ENCODE measurements at regions of chr17 and their contacts with region 1.

Region 1: GRCh38 chr17:76384222-76384986 is at the start of gene SPHK1:
- DNase-seq: peak in 4 of 5 donors; percentile 38 to 60 (median 50)
- H3K4me3 ChIP-seq: peak within 1 kb of the TSS; percentile 42 to 64
- H3K4me3 Mint-ChIP-seq: peak within 1 kb of the TSS; percentile 86 to 95 (median 90)
- H3K27ac ChIP-seq: no peak within 1 kb of the TSS
- H3K27ac Mint-ChIP-seq: peak within 1 kb of the TSS; percentile 39 to 92 (median 72)
- H3K4me1 ChIP-seq: peaks cover 20% of the 10 kb centered on the region
- H3K4me1 Mint-ChIP-seq: peaks cover 0 to 6% (median 4%) of the 10 kb centered on the region in 4 donors
- H3K27me3 ChIP-seq: no peaks in the 10 kb centered on the region
- H3K27me3 Mint-ChIP-seq: no peaks in the 10 kb centered on the region
- total RNA-seq, gene SPHK1: 0.67 to 0.70 TPM

Region 2: GRCh38 chr17:76053246-76054116 is 330.9 kb before region 1 on chr17:
- CTCF ChIA-PET with region 1: no interaction called
- POLR2A ChIA-PET with region 1: no interaction called
- intact Hi-C with region 1: no loop called
- DNase-seq: no peak
- H3K4me3 ChIP-seq: no peak overlapping the region
- H3K4me3 Mint-ChIP-seq: no peak overlapping the region
- H3K27ac ChIP-seq: no peak overlapping the region
- H3K27ac Mint-ChIP-seq: peak overlapping the region in 4 of 7 donors; percentile 31 to 52 (median 42)
- H3K4me1 ChIP-seq: peaks cover 6% of the 10 kb centered on the region
- H3K4me1 Mint-ChIP-seq: peaks cover 14 to 23% (median 20%) of the 10 kb centered on the region in 4 donors
- H3K27me3 ChIP-seq: no peaks in the 10 kb centered on the region
- H3K27me3 Mint-ChIP-seq: no peaks in the 10 kb centered on the region

Region 3: GRCh38 chr17:76304226-76305134 is 79.9 kb before region 1 on chr17:
- CTCF ChIA-PET with region 1: interaction called, 27 read pairs
- POLR2A ChIA-PET with region 1: interaction called, 4 read pairs
- intact Hi-C with region 1: no loop called
- DNase-seq: no peak
- H3K4me3 ChIP-seq: no peak overlapping the region
- H3K4me3 Mint-ChIP-seq: no peak overlapping the region
- H3K27ac ChIP-seq: no peak overlapping the region
- H3K27ac Mint-ChIP-seq: peak overlapping the region in 1 of 7 donors; percentile 71
- H3K4me1 ChIP-seq: no peaks in the 10 kb centered on the region
- H3K4me1 Mint-ChIP-seq: peaks cover 0 to 1% (median 0%) of the 10 kb centered on the region in 4 donors
- H3K27me3 ChIP-seq: no peaks in the 10 kb centered on the region
- H3K27me3 Mint-ChIP-seq: no peaks in the 10 kb centered on the region

Region 4: GRCh38 chr17:76353599-76354316 is 30.6 kb before region 1 on chr17 and contains the start of gene PRPSAP1:
- CTCF ChIA-PET with region 1: interaction called, 21 read pairs
- POLR2A ChIA-PET with region 1: interaction called, 61 read pairs
- intact Hi-C with region 1: loop called (anchors 1 kb)
- DNase-seq: peak; percentile 82 to 90 (median 85)
- H3K4me3 ChIP-seq: peak within 1 kb of the TSS; percentile 52 to 88
- H3K4me3 Mint-ChIP-seq: peak within 1 kb of the TSS; percentile 92 to 99 (median 96)
- H3K27ac ChIP-seq: peak within 1 kb of the TSS; percentile 77
- H3K27ac Mint-ChIP-seq: peak within 1 kb of the TSS; percentile 82 to 99 (median 98)
- H3K4me1 ChIP-seq: peaks cover 16% of the 10 kb centered on the region
- H3K4me1 Mint-ChIP-seq: peaks cover 12 to 29% (median 20%) of the 10 kb centered on the region in 4 donors
- H3K27me3 ChIP-seq: no peaks in the 10 kb centered on the region
- H3K27me3 Mint-ChIP-seq: no peaks in the 10 kb centered on the region
- total RNA-seq, gene PRPSAP1: 63.4 to 65.8 TPM

Region 5: DNA sequence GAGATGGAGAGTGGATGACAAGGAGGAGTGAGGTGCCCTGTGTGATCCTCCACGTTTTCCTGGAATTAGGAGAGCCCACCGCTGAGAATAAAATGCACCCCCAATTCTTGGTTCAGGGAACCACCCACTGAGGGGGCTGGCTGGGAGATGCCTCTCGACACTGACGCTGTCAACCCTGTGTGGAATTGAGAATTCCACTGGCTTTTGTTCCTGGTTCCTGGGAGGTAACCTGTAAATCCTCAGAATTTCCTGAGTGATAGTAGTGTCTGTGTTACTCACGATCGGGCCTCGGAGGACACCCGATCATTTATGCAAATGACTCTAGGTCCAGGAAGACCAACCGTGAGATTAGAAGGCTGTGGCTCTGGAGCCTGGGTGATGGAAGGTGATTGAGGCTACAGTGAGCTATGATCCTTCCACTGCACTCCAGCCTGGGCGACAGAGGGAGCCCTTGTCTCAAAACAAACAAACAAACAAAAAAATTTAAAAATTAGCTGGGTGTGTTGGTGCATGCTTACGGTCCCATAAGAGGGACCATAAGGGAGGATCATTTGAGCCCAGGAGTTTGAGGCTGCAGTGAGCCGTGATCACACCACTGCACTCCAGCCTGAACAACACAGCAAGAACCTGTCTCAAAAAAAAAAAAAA is 19.0 kb before region 1 on chr17:
- CTCF ChIA-PET with region 1: interaction called, 10 read pairs
- POLR2A ChIA-PET with region 1: no interaction called
- intact Hi-C with region 1: no loop called
- DNase-seq: no peak
- H3K4me3 ChIP-seq: no peak overlapping the region
- H3K4me3 Mint-ChIP-seq: no peak overlapping the region
- H3K27ac ChIP-seq: no peak overlapping the region
- H3K27ac Mint-ChIP-seq: no peak overlapping the region
- H3K4me1 ChIP-seq: no peaks in the 10 kb centered on the region
- H3K4me1 Mint-ChIP-seq: no peaks in the 10 kb centered on the region
- H3K27me3 ChIP-seq: no peaks in the 10 kb centered on the region
- H3K27me3 Mint-ChIP-seq: peaks cover 0 to 1% of the 10 kb centered on the region in 2 donors

Region 6: GRCh38 chr17:76408052-76408849 is 23.8 kb after region 1 on chr17:
- CTCF ChIA-PET with region 1: interaction called, 12 read pairs
- POLR2A ChIA-PET with region 1: no interaction called
- intact Hi-C with region 1: no loop called
- DNase-seq: peak; percentile 60 to 68 (median 66)
- H3K4me3 ChIP-seq: no peak overlapping the region
- H3K4me3 Mint-ChIP-seq: no peak overlapping the region
- H3K27ac ChIP-seq: no peak overlapping the region
- H3K27ac Mint-ChIP-seq: peak overlapping the region; percentile 6 to 74 (median 59)
- H3K4me1 ChIP-seq: no peaks in the 10 kb centered on the region
- H3K4me1 Mint-ChIP-seq: peaks cover 4 to 14% (median 9%) of the 10 kb centered on the region in 4 donors
- H3K27me3 ChIP-seq: no peaks in the 10 kb centered on the region
- H3K27me3 Mint-ChIP-seq: no peaks in the 10 kb centered on the region